ENCODE measurements at regions of chr15 and their contacts with region 1.

Region 1: GRCh38 chr15:92527197-92527596 is 128.4 kb downstream of the FAM174B start:
- DNase-seq: no peak
- ATAC-seq: peak; percentile 84

Region 2: DNA sequence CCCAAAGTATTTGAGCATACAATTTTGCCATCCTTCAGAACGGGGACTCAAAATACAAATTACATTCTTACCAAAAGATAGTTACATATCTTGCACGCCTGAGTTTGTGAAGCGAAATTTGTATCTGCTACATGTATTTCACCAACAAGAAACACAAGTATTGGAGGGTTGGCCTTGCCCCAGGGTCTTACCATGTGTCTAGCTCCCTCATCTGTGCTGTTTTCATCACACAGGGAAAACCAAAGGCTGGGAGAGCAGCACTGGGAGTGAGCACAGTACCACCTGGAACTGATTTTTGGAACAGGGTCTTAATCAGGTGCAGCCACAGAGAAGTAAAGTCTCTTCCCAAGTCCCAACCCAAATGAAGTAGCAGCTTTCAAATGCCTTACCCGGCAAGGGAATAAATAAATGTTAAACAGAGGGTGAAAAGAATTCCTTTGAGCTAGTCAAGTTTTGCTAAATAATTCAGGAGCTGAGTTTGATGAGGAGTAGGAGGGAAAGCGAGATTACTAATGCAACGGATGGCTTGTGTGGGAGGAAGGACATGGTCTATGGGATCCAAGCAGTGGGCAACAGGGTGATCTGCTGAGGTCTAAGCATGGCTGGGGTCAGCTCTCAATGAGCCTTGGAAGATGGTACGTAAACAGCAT is 338.2 kb before region 1 on chr15:
- intact Hi-C with region 1: no loop called
- DNase-seq: no peak
- ATAC-seq: no peak

Region 3: GRCh38 chr15:92570391-92570790 is 43.2 kb after region 1 on chr15:
- intact Hi-C with region 1: loop called (anchors 1 kb)
- DNase-seq: no peak
- ATAC-seq: no peak